Psoas muscle (tissue), 8 donors: ENCODE measurements at regions of chr2 and their contacts with region 1.

Region 1: DNA sequence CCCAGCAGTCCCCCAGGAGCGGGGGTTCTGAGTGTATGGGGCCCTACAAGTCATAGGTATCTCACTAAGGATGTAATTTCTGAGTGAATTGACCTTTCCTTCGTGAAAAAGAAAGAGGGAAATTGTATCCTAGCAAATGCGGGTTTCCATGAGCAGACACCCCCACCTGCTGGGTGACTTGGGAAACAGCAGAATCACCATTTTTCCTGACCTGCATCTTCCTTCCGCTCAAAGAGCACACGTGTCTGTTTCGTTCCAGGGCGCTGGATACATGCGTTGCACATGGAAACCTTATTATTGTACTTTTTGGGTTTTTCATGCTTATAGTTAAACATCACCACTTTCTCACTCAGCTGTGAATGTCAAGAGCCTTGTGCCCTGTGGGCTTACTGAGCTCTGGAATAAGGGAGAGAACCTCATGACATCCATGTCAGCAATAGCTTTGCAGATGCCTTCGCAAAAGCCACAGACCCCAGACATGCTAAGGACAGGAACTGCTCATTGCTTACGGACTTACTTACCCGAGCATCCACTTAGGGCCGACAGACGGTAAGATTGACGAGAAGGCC is 132.8 kb downstream of the TPO start:
- DNase-seq: no peak
- ATAC-seq: no peak
- H3K4me3 ChIP-seq: no peak overlapping the region
- H3K27ac ChIP-seq: no peak overlapping the region
- H3K4me1 ChIP-seq: peaks cover 5% of the 10 kb centered on the region
- H3K27me3 ChIP-seq: peaks cover 0 to 15% (median 6%) of the 10 kb centered on the region in 3 donors
- CTCF ChIP-seq: peak; percentile 59

Region 2: GRCh38 chr2:714005-714741 is 831.9 kb before region 1 on chr2:
- intact Hi-C with region 1: loop called (anchors 10 kb)
- DNase-seq: no peak
- ATAC-seq: peak in 2 of 4 donors; percentile 37 to 42
- H3K4me3 ChIP-seq: no peak overlapping the region
- H3K27ac ChIP-seq: no peak overlapping the region
- H3K4me1 ChIP-seq: no peaks in the 10 kb centered on the region
- H3K27me3 ChIP-seq: peaks cover 0 to 53% (median 0%) of the 10 kb centered on the region in 3 donors
- CTCF ChIP-seq: peak; percentile 42

Region 3: GRCh38 chr2:854460-854859 is 691.6 kb before region 1 on chr2:
- intact Hi-C with region 1: loop called in 1 of 2 experiments (anchors 10 kb)
- DNase-seq: no peak
- ATAC-seq: no peak
- H3K4me3 ChIP-seq: no peak overlapping the region
- H3K27ac ChIP-seq: no peak overlapping the region
- H3K4me1 ChIP-seq: no peaks in the 10 kb centered on the region
- H3K27me3 ChIP-seq: no peaks in the 10 kb centered on the region
- CTCF ChIP-seq: peak; percentile 43

Region 4: DNA sequence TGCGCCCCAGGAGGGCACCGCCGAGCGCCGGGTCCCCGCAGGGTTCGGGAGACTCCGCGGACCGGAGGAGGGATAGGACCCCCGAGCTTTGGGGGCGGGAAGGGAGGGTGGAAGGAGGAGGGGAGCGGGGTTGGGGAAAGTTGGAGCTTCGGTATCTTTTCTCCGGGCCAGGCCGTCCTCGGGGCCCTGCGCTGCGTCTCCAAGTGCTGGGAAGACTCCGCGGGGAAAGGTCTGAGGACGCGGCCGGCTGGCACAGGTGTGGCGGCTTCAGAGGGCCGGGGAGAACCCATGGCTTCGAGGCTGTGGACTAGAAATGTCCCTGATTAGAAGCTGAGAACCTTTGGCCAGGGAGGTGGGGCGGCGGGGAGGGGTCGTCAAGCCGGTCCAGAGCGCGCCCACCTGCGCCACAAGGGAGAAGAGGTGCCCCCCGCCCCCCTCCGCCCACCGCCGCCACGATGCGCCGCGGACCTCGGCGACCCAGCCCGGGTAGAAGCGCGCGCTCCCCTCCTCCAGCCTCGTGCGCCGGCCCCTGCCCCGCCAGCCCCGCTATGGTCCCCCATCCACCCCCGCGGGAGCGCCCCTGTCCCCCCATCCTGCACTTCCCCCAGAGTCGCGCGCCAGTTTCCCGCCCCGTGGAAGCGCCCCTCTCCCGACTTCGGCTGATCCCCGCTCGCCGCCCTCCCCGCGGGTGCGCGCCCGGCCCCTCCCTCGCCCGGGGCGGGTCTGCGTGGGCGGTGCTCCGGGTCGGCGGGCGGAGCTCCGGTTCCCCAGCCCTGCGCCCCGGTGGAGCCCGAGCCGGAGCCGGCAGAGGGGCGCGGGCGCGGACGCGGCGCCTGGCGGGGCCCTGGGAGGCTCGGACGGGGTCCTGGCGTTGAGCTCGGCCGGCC is 595.8 kb before region 1 on chr2 and contains the start of gene SNTG2:
- intact Hi-C with region 1: loop called in 1 of 2 experiments (anchors 5 kb)
- DNase-seq: peak in 1 of 2 donors; percentile 56
- ATAC-seq: peak in 3 of 4 donors; percentile 44 to 53 (median 44)
- H3K4me3 ChIP-seq: peak within 1 kb of the TSS; percentile 63
- H3K27ac ChIP-seq: no peak within 1 kb of the TSS
- H3K4me1 ChIP-seq: no peaks in the 10 kb centered on the region
- H3K27me3 ChIP-seq: peaks cover 6 to 72% (median 13%) of the 10 kb centered on the region in 3 donors
- CTCF ChIP-seq: no peak
- total RNA-seq, gene SNTG2: 0.73 to 1.7 (median 1.2) TPM in 3 of 4 donors, not detected in the other

Region 5: DNA sequence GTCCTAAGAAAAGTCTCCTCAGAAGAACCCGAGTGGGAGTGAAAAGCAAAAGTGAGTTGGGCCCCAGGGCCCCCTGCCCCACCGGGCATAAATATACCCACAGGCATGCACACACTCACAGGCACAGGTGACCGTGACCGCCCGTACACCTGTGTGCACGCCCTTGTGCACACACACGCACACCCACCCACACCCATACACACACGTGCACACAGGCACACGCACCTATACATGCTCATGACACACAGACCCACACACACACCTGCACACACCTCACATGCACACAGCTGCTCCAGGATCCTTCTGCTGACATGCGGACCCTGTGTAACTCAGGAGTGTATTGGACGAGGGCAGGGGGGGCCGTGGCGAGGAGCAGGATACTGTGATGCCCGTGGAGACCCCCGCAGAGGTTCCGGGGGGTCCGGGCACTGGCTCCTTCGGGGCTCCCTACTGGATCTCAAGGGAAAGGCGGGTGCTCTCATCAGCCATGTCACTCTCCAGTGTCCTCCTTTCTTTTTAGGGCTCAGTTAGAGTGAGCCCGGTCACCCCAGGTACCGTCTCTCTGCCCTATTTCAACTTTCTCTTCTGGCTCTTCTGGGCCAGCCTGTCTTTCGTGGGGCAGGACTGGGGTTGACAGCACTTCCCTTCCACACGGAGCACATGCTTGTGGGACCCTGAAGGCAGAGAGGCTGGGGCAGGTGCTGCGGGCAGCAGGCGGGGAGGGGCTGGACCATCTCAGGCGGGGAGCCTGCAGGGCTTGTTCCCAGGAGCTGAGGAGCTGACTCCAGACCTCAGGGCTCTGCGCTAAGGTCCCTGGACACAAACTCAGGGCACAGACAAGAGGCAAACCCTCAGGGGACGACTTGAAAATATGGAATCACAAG is 84.4 kb before region 1 on chr2:
- intact Hi-C with region 1: no loop called
- DNase-seq: no peak
- ATAC-seq: no peak
- H3K4me3 ChIP-seq: no peak overlapping the region
- H3K27ac ChIP-seq: no peak overlapping the region
- H3K4me1 ChIP-seq: no peaks in the 10 kb centered on the region
- H3K27me3 ChIP-seq: no peaks in the 10 kb centered on the region
- CTCF ChIP-seq: no peak